Esophagus squamous epithelium (tissue), 5 donors: ENCODE measurements at regions of chr17 and their contacts with region 1.

Region 1: DNA sequence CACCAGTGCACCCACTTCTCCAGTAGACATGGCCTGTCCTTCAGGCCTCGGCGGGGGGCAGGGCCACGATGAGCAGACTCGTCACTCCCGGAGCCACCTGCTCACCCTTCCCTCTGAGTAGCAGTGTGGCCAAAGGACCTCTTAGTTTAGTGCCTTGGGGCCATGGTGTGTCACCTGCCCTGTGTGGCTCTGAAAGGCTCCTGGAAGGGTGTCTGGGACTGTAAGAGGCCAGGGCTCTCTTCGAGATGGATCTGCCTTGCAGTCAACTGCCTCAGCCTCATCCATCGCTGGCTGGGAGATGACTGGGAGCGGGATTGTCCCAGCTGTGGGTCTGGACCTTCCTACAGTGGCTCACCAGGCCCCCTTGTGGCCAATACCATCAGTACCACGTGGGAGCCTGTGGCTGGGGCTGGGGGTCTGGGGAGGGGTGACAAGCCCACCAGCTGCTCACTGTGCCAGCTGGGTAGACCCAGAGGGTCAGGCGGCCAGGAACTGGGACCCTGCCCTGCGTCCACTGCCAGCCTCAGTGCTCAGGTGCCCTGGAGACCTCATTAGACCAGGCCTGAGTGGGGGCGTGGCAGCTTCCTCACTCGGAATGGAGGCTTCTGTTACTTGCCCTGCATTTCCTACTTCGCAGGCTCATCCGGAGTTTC is 133.4 kb downstream of the OR1D5 start:
- DNase-seq: no peak
- H3K4me3 ChIP-seq: no peak overlapping the region
- H3K27ac ChIP-seq: no peak overlapping the region
- H3K4me1 ChIP-seq: peaks cover 0 to 21% (median 0%) of the 10 kb centered on the region in 3 donors
- H3K27me3 ChIP-seq: peaks cover 0 to 2% (median 0%) of the 10 kb centered on the region in 4 donors
- CTCF ChIP-seq: peak; percentile 30 to 65 (median 52)
- POLR2A ChIP-seq: no peak

Region 2: GRCh38 chr17:2853111-2853721 is 76.8 kb before region 1 on chr17:
- intact Hi-C with region 1: loop called (anchors 5 kb)
- DNase-seq: no peak
- H3K4me3 ChIP-seq: peak overlapping the region; percentile 48 to 80 (median 60)
- H3K27ac ChIP-seq: peak overlapping the region; percentile 55 to 90 (median 82)
- H3K4me1 ChIP-seq: peaks cover 10 to 39% (median 25%) of the 10 kb centered on the region in 3 donors
- H3K27me3 ChIP-seq: peaks cover 0 to 60% (median 0%) of the 10 kb centered on the region in 4 donors
- CTCF ChIP-seq: no peak
- POLR2A ChIP-seq: peak in 1 of 4 donors; percentile 25